ENCODE measurements at regions of chr21 and their contacts with region 1.

Region 1: DNA sequence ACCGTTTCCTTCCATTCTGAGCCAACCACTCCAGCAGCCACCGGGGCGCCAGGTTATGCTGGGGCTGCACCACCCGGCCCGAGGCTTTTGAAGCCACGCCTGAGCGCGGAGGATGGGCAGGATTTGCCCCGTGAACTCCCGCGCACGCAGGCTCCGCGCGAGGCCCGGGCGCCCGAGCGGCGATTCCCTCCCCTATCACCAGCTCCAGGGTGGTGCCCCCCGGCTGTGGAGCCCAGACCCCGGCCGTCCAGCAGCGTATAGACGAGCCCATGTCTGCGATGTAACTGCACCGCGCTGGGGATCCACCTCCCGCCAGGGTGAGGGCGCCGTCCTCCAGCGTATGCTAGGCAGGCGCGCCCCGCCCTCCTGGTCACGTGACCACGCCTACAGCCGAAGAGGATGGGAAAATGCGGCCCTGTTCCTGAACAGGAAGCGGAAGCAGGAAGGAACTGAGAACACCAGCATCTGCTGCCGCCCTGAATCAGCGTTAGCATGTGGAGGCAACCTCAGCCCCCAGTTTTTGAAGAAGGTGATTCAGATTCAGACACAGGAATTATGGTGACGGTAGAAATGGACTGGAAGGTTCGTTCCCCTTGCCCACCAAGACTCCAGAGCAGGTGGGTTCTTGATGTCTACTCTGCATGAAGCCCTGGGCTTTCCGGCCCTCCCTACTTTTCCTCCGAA is 46.0 kb downstream of the VPS26C start:
- DNase-seq: peak; percentile 98
- H3K4me3 Mint-ChIP-seq: peak overlapping the region; percentile 88
- H3K27ac Mint-ChIP-seq: peak overlapping the region; percentile 97
- H3K4me1 Mint-ChIP-seq: peaks cover 52% of the 10 kb centered on the region
- H3K27me3 Mint-ChIP-seq: no peaks in the 10 kb centered on the region

Region 2: GRCh38 chr21:37055271-37055855 is 165.8 kb before region 1 on chr21:
- CTCF ChIA-PET with region 1: no interaction called
- intact Hi-C with region 1: no loop called
- DNase-seq: no peak
- H3K4me3 Mint-ChIP-seq: no peak overlapping the region
- H3K27ac Mint-ChIP-seq: no peak overlapping the region
- H3K4me1 Mint-ChIP-seq: no peaks in the 10 kb centered on the region
- H3K27me3 Mint-ChIP-seq: no peaks in the 10 kb centered on the region

Region 3: DNA sequence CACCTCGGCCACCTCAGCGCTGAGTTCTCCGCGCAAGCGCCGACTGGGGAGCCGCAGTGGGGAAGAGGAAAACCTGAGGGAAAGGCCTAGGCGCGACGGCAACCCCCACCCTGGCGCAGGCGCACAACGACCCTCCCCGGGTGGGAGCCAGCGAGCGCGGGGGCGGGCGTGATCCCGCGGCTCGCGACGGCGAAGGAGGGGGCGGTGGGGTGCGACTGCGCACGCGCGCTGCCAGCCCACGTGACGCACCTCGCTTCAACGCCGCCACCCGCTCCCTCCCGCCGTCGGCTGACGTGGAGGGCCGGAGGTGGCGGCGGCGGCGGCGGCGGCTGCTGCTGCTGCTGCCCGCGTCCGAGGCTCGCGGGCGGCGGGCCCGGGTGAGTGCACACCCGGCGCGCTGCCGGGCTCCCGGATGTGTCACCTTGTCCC is 148.1 kb before region 1 on chr21 and contains the starts of genes PIGP and TTC3:
- CTCF ChIA-PET with region 1: no interaction called
- intact Hi-C with region 1: loop called (anchors 2 kb)
- DNase-seq: peak; percentile 94
- H3K4me3 Mint-ChIP-seq: peak within 1 kb of the TSS; percentile 88
- H3K27ac Mint-ChIP-seq: peak within 1 kb of the TSS; percentile 86
- H3K4me1 Mint-ChIP-seq: peaks cover 42% of the 10 kb centered on the region
- H3K27me3 Mint-ChIP-seq: no peaks in the 10 kb centered on the region
- total RNA-seq, gene PIGP: 12.0 to 16.9 TPM
- total RNA-seq, gene TTC3: 53.7 to 53.8 TPM

Region 4: DNA sequence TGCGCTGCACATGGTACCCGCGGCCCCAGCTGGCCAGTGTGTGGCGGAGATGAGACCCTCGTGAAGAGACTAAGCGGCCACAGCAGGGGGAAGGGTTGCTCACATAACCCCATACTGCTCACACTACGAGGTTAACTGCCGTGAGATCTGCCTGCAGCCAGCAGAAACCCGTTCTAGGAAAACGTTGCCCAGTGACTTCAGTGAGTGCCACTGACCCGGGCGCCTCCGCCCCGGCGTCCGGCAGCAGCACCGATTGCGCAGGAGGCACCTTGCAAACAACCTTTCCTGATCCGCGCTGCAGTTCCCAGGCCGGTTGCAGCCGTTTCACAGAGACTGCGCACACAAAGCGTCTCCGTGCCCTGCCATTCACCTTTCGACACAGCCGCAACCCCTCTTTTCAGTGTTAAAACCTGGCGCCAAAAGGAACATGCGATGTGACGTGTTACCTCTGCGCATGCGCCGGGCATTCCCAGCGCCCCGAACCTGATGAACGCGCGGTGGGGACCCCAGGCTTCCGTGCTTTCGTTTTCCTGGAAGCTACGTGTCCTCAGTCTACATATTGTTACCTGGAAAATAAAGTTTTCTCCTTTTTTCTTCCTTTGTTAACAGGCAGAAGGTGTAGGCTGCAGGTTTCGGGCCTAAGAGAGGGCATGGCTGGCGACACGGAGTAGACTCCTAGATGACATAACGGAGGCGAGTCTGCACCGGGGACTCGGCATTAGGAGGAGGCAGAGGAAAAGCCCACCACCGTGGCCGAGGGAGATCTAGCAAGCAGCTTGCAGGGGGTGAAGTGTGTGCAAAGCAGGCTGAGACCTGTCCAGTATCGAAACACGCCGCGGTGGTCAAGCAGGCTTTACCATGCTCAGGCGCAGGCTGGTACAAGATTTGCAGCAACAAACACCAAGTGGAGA is 37.1 kb after region 1 on chr21:
- CTCF ChIA-PET with region 1: no interaction called
- intact Hi-C with region 1: loop called (anchors 1 kb)
- DNase-seq: peak; percentile 88
- H3K4me3 Mint-ChIP-seq: peak overlapping the region; percentile 77
- H3K27ac Mint-ChIP-seq: peak overlapping the region; percentile 91
- H3K4me1 Mint-ChIP-seq: peaks cover 25% of the 10 kb centered on the region
- H3K27me3 Mint-ChIP-seq: no peaks in the 10 kb centered on the region

Region 5: GRCh38 chr21:37366482-37367316 is 145.6 kb after region 1 on chr21 and contains the start of gene DYRK1A:
- CTCF ChIA-PET with region 1: no interaction called
- intact Hi-C with region 1: loop called (anchors 1 kb)
- DNase-seq: peak; percentile 99
- H3K4me3 Mint-ChIP-seq: peak within 1 kb of the TSS; percentile 99
- H3K27ac Mint-ChIP-seq: peak within 1 kb of the TSS; percentile 100
- H3K4me1 Mint-ChIP-seq: peaks cover 34% of the 10 kb centered on the region
- H3K27me3 Mint-ChIP-seq: no peaks in the 10 kb centered on the region
- total RNA-seq, gene DYRK1A: 49.8 to 51.4 TPM

Region 6: GRCh38 chr21:37496972-37497371 is 275.8 kb after region 1 on chr21:
- CTCF ChIA-PET with region 1: no interaction called
- intact Hi-C with region 1: loop called (anchors 5 kb)
- DNase-seq: no peak
- H3K4me3 Mint-ChIP-seq: no peak overlapping the region
- H3K27ac Mint-ChIP-seq: no peak overlapping the region
- H3K4me1 Mint-ChIP-seq: peaks cover 5% of the 10 kb centered on the region
- H3K27me3 Mint-ChIP-seq: no peaks in the 10 kb centered on the region

Region 7: GRCh38 chr21:37582590-37582989 is 361.5 kb after region 1 on chr21:
- CTCF ChIA-PET with region 1: no interaction called
- intact Hi-C with region 1: loop called (anchors 5 kb)
- DNase-seq: peak; percentile 35
- H3K4me3 Mint-ChIP-seq: no peak overlapping the region
- H3K27ac Mint-ChIP-seq: peak overlapping the region; percentile 19
- H3K4me1 Mint-ChIP-seq: peaks cover 6% of the 10 kb centered on the region
- H3K27me3 Mint-ChIP-seq: peaks cover 5% of the 10 kb centered on the region